ENCODE measurements at regions of chr14 and their contacts with region 1.

Region 1: DNA sequence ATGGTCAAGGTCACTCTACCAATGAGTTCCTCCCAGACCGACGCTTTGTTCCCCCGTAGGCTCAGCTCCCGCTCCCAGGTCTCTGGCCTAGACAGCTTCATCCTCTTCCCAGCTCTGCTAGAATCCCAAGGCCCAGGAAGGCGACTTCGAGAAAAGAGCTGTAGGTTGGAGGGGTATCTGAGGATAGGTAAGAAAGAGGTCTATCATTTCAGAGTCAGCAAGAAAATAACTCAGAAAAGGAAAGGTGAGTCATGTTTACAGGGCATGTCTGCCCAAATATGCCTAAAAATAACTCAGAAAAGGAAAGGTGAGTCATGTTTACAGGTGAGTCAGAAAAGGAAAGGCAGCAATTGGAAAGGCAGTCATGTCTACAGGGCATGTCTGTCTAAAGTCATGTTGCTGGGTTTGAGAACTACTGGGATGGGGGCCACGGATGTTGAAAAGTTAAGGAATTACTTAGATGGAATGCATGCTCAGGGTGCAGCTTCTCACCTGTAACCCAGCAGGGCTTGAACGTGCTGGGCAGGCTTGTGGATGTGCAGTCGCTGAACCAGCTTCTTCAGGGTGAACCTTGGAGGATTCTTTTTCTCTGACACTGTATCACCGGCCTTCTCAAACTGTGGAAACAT is 12.2 kb downstream of the TEP1 start:
- DNase-seq: no peak
- H3K4me3 ChIP-seq: no peak overlapping the region
- H3K27ac ChIP-seq: no peak overlapping the region
- H3K27me3 ChIP-seq: no peaks in the 10 kb centered on the region
- CTCF ChIP-seq: no peak

Region 2: GRCh38 chr14:20356422-20356821 is 44.7 kb before region 1 on chr14:
- intact Hi-C with region 1: loop called in 1 of 2 experiments (anchors 5 kb)
- DNase-seq: no peak
- H3K4me3 ChIP-seq: no peak overlapping the region
- H3K27ac ChIP-seq: no peak overlapping the region
- H3K27me3 ChIP-seq: no peaks in the 10 kb centered on the region
- CTCF ChIP-seq: no peak

Measured in dorsolateral prefrontal cortex (tissue), 120 donors.